Naive thymus-derived CD4-positive, alpha-beta T cell (primary cell): ENCODE measurements at regions of chr4 and their contacts with region 1.

Region 1: DNA sequence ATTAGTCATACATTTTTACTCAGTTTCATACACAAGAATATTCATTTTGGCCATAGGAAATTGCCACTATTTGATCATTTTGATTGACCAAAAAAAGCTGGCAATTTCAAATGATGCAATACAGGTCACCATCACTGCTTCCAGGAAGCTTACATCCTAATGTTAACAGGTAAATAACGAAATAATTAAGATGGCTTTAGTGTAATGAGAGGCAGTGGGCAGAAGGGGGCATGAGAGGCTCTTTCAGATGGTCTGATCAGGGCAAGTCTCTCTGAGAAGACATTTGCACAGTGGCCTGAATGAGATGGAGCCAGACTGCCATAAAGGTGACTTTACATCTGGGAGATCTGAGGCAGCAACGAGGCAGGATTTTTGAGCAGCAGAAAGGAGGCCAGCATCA is 170.7 kb downstream of the SLIT2 start:
- DNase-seq: peak in 4 of 9 donors; percentile 2 to 17 (median 11)
- ATAC-seq: peak; percentile 64
- H3K4me3 ChIP-seq: no peak overlapping the region
- H3K4me3 Mint-ChIP-seq: no peak overlapping the region
- H3K27ac ChIP-seq: no peak overlapping the region
- H3K27ac Mint-ChIP-seq: no peak overlapping the region
- H3K4me1 ChIP-seq: no peaks in the 10 kb centered on the region
- H3K4me1 Mint-ChIP-seq: peaks cover 0 to 15% (median 5%) of the 10 kb centered on the region in 7 donors
- H3K27me3 ChIP-seq: no peaks in the 10 kb centered on the region
- H3K27me3 Mint-ChIP-seq: peaks cover 4 to 13% (median 5%) of the 10 kb centered on the region in 5 donors

Region 2: DNA sequence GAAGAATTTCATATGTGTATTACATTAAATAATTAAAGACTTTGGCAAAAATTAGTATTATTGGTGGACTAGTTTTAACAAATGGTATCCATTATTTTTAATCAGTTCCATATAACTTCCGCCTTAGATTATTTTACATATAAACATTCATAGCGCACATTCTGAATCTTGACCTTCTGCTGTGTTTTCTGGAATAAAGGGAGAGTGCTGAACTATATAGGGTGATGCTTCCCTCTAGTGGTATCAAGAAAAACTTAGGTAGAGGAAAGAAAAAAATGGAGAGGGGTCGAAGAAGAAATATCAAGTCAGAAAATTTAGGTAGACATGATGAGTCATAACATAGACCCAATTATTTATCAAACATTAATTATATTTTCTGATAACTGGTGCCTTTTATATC is 122.2 kb after region 1 on chr4:
- CTCF ChIA-PET with region 1: no interaction called
- POLR2A ChIA-PET with region 1: no interaction called
- intact Hi-C with region 1: loop called (anchors 1 to 5 kb)
- DNase-seq: no peak
- ATAC-seq: no peak
- H3K4me3 ChIP-seq: no peak overlapping the region
- H3K4me3 Mint-ChIP-seq: no peak overlapping the region
- H3K27ac ChIP-seq: no peak overlapping the region
- H3K27ac Mint-ChIP-seq: no peak overlapping the region
- H3K4me1 ChIP-seq: no peaks in the 10 kb centered on the region
- H3K4me1 Mint-ChIP-seq: no peaks in the 10 kb centered on the region
- H3K27me3 ChIP-seq: no peaks in the 10 kb centered on the region
- H3K27me3 Mint-ChIP-seq: no peaks in the 10 kb centered on the region

Region 3: GRCh38 chr4:20700007-20700761 is 277.8 kb after region 1 on chr4 and contains the start of gene PACRGL:
- CTCF ChIA-PET with region 1: no interaction called
- POLR2A ChIA-PET with region 1: no interaction called
- intact Hi-C with region 1: loop called in 1 of 2 experiments (anchors 5 kb)
- DNase-seq: peak; percentile 82 to 94 (median 92)
- ATAC-seq: peak; percentile 99
- H3K4me3 ChIP-seq: peak within 1 kb of the TSS; percentile 73
- H3K4me3 Mint-ChIP-seq: peak within 1 kb of the TSS; percentile 91 to 98 (median 96)
- H3K27ac ChIP-seq: peak within 1 kb of the TSS; percentile 72
- H3K27ac Mint-ChIP-seq: peak within 1 kb of the TSS; percentile 91 to 97 (median 95)
- H3K4me1 ChIP-seq: peaks cover 10 to 13% of the 10 kb centered on the region in 2 donors
- H3K4me1 Mint-ChIP-seq: peaks cover 20 to 55% (median 44%) of the 10 kb centered on the region in 7 donors
- H3K27me3 ChIP-seq: peaks cover 0 to 4% of the 10 kb centered on the region in 2 donors
- H3K27me3 Mint-ChIP-seq: peaks cover 0 to 5% (median 4%) of the 10 kb centered on the region in 5 donors
- total RNA-seq, gene PACRGL: 10.7 to 15.7 (median 11.7) TPM

Region 4: DNA sequence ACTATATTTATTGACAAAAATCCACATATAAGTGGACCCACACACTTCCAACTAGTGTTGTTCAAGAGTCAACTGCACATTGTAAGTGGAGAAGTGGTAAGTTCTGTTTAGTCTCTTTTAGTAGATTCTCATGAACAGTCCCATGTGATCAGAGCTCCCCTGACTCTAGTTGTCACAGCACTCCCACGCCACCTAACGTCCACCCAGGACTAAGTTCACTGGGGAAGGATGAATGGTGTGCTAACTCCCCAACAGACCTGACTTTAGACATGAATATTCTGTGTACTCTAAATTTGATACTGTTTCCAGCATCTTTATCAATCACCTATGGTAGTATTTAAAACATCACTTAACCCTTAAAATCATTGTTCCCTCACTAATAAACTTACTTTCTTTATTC is 337.7 kb after region 1 on chr4:
- CTCF ChIA-PET with region 1: no interaction called
- POLR2A ChIA-PET with region 1: no interaction called
- intact Hi-C with region 1: no loop called
- DNase-seq: no peak
- ATAC-seq: no peak
- H3K4me3 ChIP-seq: no peak overlapping the region
- H3K4me3 Mint-ChIP-seq: no peak overlapping the region
- H3K27ac ChIP-seq: no peak overlapping the region
- H3K27ac Mint-ChIP-seq: no peak overlapping the region
- H3K4me1 ChIP-seq: no peaks in the 10 kb centered on the region
- H3K4me1 Mint-ChIP-seq: no peaks in the 10 kb centered on the region
- H3K27me3 ChIP-seq: no peaks in the 10 kb centered on the region
- H3K27me3 Mint-ChIP-seq: no peaks in the 10 kb centered on the region

Region 5: GRCh38 chr4:21469438-21470300 is 1047.3 kb after region 1 on chr4:
- CTCF ChIA-PET with region 1: no interaction called
- POLR2A ChIA-PET with region 1: no interaction called
- intact Hi-C with region 1: loop called in 1 of 2 experiments (anchors 5 kb)
- DNase-seq: no peak
- ATAC-seq: no peak
- H3K4me3 ChIP-seq: no peak overlapping the region
- H3K4me3 Mint-ChIP-seq: no peak overlapping the region
- H3K27ac ChIP-seq: no peak overlapping the region
- H3K27ac Mint-ChIP-seq: no peak overlapping the region
- H3K4me1 ChIP-seq: no peaks in the 10 kb centered on the region
- H3K4me1 Mint-ChIP-seq: no peaks in the 10 kb centered on the region
- H3K27me3 ChIP-seq: no peaks in the 10 kb centered on the region
- H3K27me3 Mint-ChIP-seq: peaks cover 0 to 4% (median 0%) of the 10 kb centered on the region in 5 donors